ENCODE measurements at regions of chr5 and their contacts with region 1.

Region 1: DNA sequence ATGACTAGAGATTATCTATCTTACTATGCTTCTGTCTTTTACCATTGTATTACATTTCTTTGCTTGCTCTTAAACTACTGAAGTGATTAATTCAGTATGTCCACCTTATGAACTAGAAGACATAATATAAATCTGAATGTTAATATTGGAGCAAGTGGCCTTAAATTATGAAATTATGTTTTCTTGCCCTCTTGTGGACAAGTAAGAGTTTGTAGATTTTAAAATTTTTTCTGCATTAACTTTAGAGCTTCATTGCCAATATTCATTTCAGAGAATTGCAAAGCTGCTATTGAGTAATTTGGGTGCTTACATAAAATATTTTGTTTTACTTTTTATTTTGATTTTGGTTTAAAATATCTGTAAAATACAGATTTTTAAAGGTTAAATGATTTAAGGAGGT is 55.3 kb downstream of the RANBP17 start:
- DNase-seq: no peak
- H3K4me3 ChIP-seq: no peak overlapping the region
- H3K4me3 Mint-ChIP-seq: no peak overlapping the region
- H3K27ac ChIP-seq: no peak overlapping the region
- H3K27ac Mint-ChIP-seq: no peak overlapping the region
- H3K4me1 ChIP-seq: no peaks in the 10 kb centered on the region
- H3K4me1 Mint-ChIP-seq: no peaks in the 10 kb centered on the region
- H3K27me3 ChIP-seq: no peaks in the 10 kb centered on the region
- H3K27me3 Mint-ChIP-seq: no peaks in the 10 kb centered on the region
- CTCF ChIP-seq: no peak

Region 2: GRCh38 chr5:170132269-170132975 is 784.7 kb before region 1 on chr5:
- intact Hi-C with region 1: loop called in 1 of 2 experiments (anchors 10 kb)
- DNase-seq: no peak
- H3K4me3 ChIP-seq: no peak overlapping the region
- H3K4me3 Mint-ChIP-seq: no peak overlapping the region
- H3K27ac ChIP-seq: no peak overlapping the region
- H3K27ac Mint-ChIP-seq: no peak overlapping the region
- H3K4me1 ChIP-seq: no peaks in the 10 kb centered on the region
- H3K4me1 Mint-ChIP-seq: peaks cover 9% of the 10 kb centered on the region
- H3K27me3 ChIP-seq: no peaks in the 10 kb centered on the region
- H3K27me3 Mint-ChIP-seq: peaks cover 4 to 10% (median 5%) of the 10 kb centered on the region in 3 donors
- CTCF ChIP-seq: no peak